MCF 10A (cell line): ENCODE measurements at regions of chr16 and their contacts with region 1.

Region 1: DNA sequence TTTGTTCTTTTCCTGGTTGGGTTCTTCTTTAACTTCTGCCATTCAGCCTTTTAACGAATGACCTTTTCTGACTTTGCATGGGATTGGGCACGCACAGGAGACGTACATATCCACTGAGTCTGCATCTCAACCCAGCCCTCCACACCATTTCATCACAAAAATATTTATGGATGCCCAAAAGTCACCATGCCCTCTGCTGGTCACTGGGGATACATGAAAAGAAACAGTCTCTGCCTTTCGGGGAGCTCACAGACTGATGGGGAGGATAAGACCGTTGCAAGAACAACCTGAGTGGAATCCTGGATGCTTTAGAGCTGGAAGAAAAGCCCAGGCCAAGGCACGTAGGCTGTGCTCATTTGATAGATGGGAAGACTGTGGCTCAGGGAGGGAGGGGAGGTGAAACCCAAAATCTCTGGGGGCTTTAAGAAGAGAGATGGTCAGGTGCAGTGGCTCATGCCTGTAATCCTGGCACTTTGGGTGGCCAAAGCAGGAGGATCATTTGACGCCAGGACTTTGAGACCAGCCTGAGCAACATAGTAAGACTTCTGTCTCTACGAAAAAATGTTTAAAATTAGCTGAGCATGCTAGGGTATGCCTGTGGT is 7.9 kb upstream of the MT2A start:
- DNase-seq: peak; percentile 81
- H3K4me3 Mint-ChIP-seq: no peak overlapping the region
- H3K27ac Mint-ChIP-seq: no peak overlapping the region
- H3K4me1 Mint-ChIP-seq: peaks cover 14% of the 10 kb centered on the region
- H3K27me3 Mint-ChIP-seq: no peaks in the 10 kb centered on the region
- CTCF ChIP-seq: peak; percentile 71

Region 2: DNA sequence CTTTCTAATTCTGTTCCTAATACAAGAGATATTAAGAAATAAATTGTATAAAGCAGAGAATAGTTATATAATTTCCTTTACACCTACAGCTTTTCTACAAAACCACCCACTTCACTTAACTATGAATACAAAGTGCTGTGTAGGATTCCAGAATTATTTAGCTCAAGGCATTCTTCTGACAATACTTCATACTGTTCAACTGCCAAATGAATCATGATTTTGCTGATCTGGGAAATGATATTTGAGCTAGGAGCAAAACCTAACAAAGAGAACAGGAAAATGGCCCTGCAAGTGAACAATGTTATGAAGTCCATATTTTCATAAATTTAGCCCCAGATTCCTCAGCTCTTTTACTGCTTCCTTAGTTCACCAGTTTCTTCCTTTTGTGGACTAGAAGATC is 93.6 kb before region 1 on chr16:
- CTCF ChIA-PET with region 1: interaction called, 20 read pairs
- POLR2A ChIA-PET with region 1: interaction called, 3 read pairs
- intact Hi-C with region 1: no loop called
- DNase-seq: no peak
- H3K4me3 Mint-ChIP-seq: no peak overlapping the region
- H3K27ac Mint-ChIP-seq: peak overlapping the region; percentile 21
- H3K4me1 Mint-ChIP-seq: no peaks in the 10 kb centered on the region
- H3K27me3 Mint-ChIP-seq: no peaks in the 10 kb centered on the region
- CTCF ChIP-seq: no peak

Region 3: DNA sequence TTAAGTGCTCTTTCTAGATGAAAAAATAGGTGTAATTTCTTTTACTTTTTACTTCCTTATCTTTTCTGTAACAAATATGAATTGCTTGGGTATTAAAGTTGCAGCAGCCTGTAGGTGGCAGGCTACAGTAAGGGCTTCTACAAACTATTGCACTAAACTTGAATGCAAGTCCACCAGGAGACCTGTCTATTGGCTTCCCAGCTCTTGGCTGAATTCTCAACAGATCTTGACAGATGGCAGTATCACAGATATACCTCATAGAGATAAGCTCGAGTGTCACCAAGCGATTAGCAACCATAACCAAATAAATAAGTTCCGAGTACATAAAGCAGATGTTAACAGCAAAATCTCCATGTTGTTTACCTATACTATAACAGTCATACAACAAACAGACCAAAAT is 86.5 kb before region 1 on chr16:
- CTCF ChIA-PET with region 1: interaction called, 72 read pairs
- POLR2A ChIA-PET with region 1: interaction called, 85 read pairs
- intact Hi-C with region 1: loop called (anchors 1 kb)
- DNase-seq: peak; percentile 67
- H3K4me3 Mint-ChIP-seq: no peak overlapping the region
- H3K27ac Mint-ChIP-seq: no peak overlapping the region
- H3K4me1 Mint-ChIP-seq: peaks cover 21% of the 10 kb centered on the region
- H3K27me3 Mint-ChIP-seq: no peaks in the 10 kb centered on the region
- CTCF ChIP-seq: peak; percentile 50

Region 4: DNA sequence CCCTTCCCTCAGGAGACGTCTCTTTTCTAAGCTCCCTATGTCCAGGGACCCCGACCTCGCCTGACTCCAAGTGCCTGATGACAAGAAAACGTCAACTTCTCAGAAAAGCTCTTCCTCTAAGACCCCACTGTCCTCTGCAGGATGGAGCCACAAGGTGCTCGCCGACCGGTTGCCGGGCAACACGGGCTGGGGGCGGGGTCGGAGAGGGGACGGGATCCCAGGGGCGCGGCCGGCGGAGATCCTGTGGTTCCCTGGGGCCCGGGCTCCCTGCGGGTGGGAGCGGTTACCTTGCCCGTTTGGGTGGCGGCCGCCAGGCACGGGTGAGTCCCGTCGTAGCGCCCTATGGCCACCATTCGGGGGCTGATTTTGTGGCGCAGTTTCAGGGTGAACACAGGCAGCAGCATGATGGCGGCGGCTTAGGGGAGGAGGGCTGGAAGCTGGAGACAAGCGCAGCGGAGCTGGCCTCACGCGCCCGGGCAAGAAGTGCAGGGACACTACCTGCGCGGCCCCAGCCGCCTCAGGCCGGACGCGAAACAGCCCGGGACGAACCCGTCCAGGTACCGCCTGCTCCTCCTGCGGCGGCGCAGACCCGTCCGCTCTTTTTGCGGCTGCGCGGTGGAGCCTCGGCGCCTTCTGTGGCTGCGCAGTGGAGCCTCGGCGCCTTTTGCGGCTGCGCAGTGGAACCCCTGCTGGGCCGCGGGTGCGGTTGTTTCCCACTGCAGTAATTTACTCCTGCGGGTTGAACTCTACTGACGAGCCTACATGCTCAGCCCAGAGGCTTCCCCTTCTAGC is 80.8 kb before region 1 on chr16 and contains the start of gene BBS2:
- CTCF ChIA-PET with region 1: interaction called, 72 read pairs
- POLR2A ChIA-PET with region 1: interaction called, 85 read pairs
- intact Hi-C with region 1: loop called (anchors 1 kb)
- DNase-seq: peak; percentile 83
- H3K4me3 Mint-ChIP-seq: peak within 1 kb of the TSS; percentile 81
- H3K27ac Mint-ChIP-seq: peak within 1 kb of the TSS; percentile 83
- H3K4me1 Mint-ChIP-seq: peaks cover 29% of the 10 kb centered on the region
- H3K27me3 Mint-ChIP-seq: no peaks in the 10 kb centered on the region
- CTCF ChIP-seq: no peak
- total RNA-seq, gene BBS2: 23.9 and 25.8 TPM in 2 replicates

Region 5: GRCh38 chr16:56547120-56547948 is 53.2 kb before region 1 on chr16:
- CTCF ChIA-PET with region 1: interaction called, 11 read pairs
- POLR2A ChIA-PET with region 1: no interaction called
- intact Hi-C with region 1: no loop called
- DNase-seq: peak; percentile 60
- H3K4me3 Mint-ChIP-seq: no peak overlapping the region
- H3K27ac Mint-ChIP-seq: no peak overlapping the region
- H3K4me1 Mint-ChIP-seq: peaks cover 20% of the 10 kb centered on the region
- H3K27me3 Mint-ChIP-seq: no peaks in the 10 kb centered on the region
- CTCF ChIP-seq: no peak

Region 6: GRCh38 chr16:56657555-56658326 is 57.2 kb after region 1 on chr16 and contains the start of gene MT1F:
- CTCF ChIA-PET with region 1: interaction called, 10 read pairs
- POLR2A ChIA-PET with region 1: interaction called, 50 read pairs
- intact Hi-C with region 1: no loop called
- DNase-seq: peak; percentile 95
- H3K4me3 Mint-ChIP-seq: peak within 1 kb of the TSS; percentile 77
- H3K27ac Mint-ChIP-seq: no peak within 1 kb of the TSS
- H3K4me1 Mint-ChIP-seq: peaks cover 21% of the 10 kb centered on the region
- H3K27me3 Mint-ChIP-seq: no peaks in the 10 kb centered on the region
- CTCF ChIP-seq: no peak
- total RNA-seq, gene MT1F: 1.7 and 2.4 TPM in 2 replicates